ENCODE measurements at regions of chr20 and their contacts with region 1.

Region 1: GRCh38 chr20:35741892-35742740 is at the start of gene RBM39:
- DNase-seq: peak; percentile 100
- H3K27ac ChIP-seq: peak within 1 kb of the TSS; percentile 96
- CTCF ChIP-seq: no peak; the same call in 1 of the 2 replicates

Region 2: DNA sequence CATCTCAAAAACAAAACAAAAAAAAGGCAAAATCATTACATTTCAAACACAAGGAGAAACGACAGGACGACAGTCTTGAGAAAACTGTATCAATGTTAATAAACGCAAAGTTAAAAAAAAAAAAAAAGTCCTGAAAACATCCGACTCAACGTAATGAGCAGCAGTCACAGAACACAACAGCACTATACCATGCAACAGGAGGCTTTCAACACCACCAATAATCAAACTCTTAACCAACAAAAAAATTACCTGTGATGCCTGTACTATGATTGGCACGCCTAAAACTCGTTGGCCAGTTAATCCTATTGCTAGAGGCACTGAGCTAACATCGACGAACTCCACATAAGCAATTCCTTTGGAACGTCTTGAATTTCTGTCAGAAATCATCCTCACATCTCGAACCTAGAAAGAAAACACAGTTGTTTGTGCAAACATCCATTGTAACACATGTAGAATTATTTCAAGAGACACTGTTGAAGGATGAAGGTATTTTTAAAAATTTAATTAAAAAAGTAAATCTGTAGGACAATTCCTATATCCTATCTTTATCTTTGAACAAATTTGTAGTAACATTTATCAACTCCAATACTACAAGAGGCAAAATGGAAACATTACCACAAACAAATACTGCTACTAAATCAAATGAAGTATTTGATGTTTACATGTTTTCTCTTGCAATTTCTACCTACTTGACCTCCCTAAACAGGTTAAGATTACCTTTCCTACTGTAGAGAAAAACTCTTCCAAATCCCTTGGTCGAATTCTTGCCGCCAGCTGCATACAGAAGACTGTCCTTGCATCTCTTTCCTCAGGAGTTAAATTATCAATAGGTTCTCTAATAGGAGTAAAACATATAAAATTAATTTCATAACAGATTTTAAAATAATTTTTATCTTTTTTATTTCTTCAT is 17.5 kb before region 1 on chr20:
- CTCF ChIA-PET with region 1: interaction called, 7 read pairs
- POLR2A ChIA-PET with region 1: interaction called, 10 read pairs
- DNase-seq: no peak
- H3K27ac ChIP-seq: no peak overlapping the region
- CTCF ChIP-seq: no peak

Region 3: GRCh38 chr20:35771689-35772562 is 29.8 kb after region 1 on chr20 and contains the start of gene PHF20:
- CTCF ChIA-PET with region 1: no interaction called
- POLR2A ChIA-PET with region 1: interaction called, 29 read pairs
- DNase-seq: peak; percentile 100
- H3K27ac ChIP-seq: peak within 1 kb of the TSS; percentile 86
- CTCF ChIP-seq: no peak

Region 4: GRCh38 chr20:35871311-35871771 is 129.2 kb after region 1 on chr20:
- CTCF ChIA-PET with region 1: interaction called, 5 read pairs
- POLR2A ChIA-PET with region 1: interaction called, 11 read pairs
- DNase-seq: peak; percentile 81
- H3K27ac ChIP-seq: peak overlapping the region; percentile 78; the same call in 1 of the 2 replicates
- CTCF ChIP-seq: no peak

Region 5: DNA sequence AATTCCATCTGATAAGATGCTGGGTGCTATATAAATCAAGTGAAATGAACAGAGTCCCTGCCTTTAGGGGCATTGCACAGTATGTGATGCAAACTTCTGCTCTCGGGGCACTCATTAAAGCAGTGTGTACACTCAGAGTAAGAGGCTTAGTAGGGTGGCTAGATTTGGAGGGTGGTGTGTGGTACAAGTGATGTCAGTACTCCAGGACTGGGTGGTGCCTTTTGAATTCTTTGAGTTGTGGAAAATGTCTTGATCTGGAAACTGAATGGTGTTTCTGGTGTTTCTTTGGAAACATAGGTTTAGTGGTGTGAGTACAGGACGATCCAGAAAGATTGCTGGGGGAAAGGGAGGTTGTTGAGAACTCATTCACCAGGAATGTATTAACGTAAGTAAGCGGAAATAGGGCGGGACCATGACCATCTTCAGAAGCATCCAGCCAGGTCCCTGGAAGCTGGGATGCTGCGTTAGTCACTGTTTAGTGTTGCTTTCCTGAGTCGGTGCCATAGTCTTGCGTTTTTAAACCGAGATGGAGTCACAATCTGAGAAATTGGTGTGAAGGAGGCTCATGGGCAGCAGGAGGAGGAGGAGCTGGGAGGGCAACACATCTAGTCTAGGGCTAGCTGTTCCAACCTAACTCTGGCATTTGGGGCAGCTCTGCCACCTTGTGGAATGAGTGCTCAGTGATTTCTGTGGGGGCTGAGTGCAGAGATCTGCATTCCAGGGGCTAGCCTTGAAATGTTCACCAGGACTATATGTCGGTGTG is 141.8 kb after region 1 on chr20:
- CTCF ChIA-PET with region 1: interaction called, 5 read pairs
- POLR2A ChIA-PET with region 1: interaction called, 18 read pairs
- DNase-seq: peak; percentile 99
- H3K27ac ChIP-seq: peak overlapping the region; percentile 99
- CTCF ChIP-seq: peak; percentile 99

Region 6: DNA sequence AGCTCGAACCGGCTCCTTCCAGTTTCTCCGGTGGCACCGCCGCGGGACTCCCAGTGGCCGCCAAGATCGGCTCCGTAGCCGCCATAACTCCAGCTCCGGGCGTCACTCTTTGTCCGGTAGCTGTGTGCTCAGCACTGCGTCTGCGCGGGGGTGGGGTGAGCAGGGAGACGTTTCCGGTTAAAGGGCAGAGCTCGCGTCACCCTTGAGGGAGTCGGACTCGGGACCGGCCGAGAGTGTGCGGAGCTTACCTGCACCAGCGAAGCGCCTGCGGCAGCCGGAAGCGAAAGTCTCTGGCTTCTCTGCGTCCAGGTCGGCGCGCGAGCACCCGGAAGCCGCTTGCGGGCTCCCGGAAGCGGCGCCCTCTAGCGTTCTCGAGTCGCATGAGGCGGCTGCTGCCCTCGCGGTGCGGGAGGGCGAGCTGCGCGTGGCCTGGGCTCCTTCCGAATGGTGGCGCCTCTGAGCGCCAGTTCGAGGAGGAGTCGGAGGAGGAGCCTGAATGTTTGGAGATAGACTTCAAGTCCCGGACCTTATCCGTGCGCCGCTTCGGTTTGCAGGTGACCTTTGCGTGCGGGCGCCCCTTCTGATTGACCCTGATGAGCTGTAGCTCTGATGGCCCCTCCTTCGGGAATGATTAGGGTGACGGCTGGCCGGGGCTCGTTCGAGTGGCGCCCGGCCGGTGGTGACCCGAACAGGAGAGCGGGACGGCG is 212.2 kb after region 1 on chr20 and contains the start of gene SCAND1:
- CTCF ChIA-PET with region 1: interaction called, 4 read pairs
- POLR2A ChIA-PET with region 1: interaction called, 15 read pairs
- DNase-seq: peak; percentile 100
- H3K27ac ChIP-seq: peak within 1 kb of the TSS; percentile 99
- CTCF ChIP-seq: peak; percentile 100

Measured in RWPE1 (cell line).